Mammary epithelial cell (primary cell): ENCODE measurements at regions of chr4 and their contacts with region 1.

Region 1: DNA sequence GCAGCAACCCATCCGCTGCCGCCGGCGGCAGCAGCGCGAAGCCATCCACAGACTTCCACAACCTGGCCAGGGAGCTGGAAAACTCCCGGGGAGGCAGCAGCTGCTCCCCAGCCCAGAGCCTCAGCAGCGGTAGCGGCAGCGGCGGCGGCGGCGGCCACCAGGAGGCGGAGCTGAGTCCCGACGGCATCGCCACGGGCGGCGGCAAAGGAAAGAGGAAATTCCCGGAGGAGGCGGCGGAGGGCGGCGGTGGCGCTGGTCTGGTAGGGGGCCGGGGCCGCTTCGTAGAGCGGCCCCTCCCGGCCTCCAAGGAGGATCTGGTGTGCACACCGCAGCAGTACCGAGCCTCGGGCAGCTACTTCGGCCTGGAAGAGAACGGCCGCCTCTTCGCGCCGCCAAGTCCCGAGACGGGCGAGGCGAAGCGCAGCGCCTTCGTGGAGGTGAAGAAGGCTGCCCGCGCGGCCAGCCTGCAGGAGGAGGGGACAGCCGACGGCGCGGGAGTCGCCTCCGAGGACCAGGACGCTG is 4.9 kb downstream of the PRDM8 start:
- DNase-seq: peak; percentile 68
- H3K4me3 ChIP-seq: peak overlapping the region; percentile 52 to 69 (median 59)
- H3K27ac ChIP-seq: peak overlapping the region; percentile 36
- H3K4me1 ChIP-seq: peaks cover 30% of the 10 kb centered on the region
- H3K27me3 ChIP-seq: no peaks in the 10 kb centered on the region
- CTCF ChIP-seq: peak; percentile 42 to 72

Region 2: GRCh38 chr4:79917246-79917645 is 285.0 kb before region 1 on chr4:
- CTCF ChIA-PET with region 1: no interaction called
- dilution Hi-C with region 1: no loop called
- in situ Hi-C with region 1: loop called (anchors 25 kb)
- intact Hi-C with region 1: no loop called
- DNase-seq: peak; percentile 32
- H3K4me3 ChIP-seq: no peak overlapping the region
- H3K27ac ChIP-seq: no peak overlapping the region
- H3K4me1 ChIP-seq: peaks cover 7% of the 10 kb centered on the region
- H3K27me3 ChIP-seq: no peaks in the 10 kb centered on the region
- CTCF ChIP-seq: peak; percentile 57 to 86

Region 3: GRCh38 chr4:80079255-80079923 is 122.9 kb before region 1 on chr4:
- CTCF ChIA-PET with region 1: interaction called, 37 read pairs
- dilution Hi-C with region 1: no loop called
- in situ Hi-C with region 1: no loop called
- intact Hi-C with region 1: loop called (anchors 5 kb)
- DNase-seq: no peak
- H3K4me3 ChIP-seq: no peak overlapping the region
- H3K27ac ChIP-seq: peak overlapping the region; percentile 1
- H3K4me1 ChIP-seq: peaks cover 48% of the 10 kb centered on the region
- H3K27me3 ChIP-seq: no peaks in the 10 kb centered on the region
- CTCF ChIP-seq: no peak

Region 4: DNA sequence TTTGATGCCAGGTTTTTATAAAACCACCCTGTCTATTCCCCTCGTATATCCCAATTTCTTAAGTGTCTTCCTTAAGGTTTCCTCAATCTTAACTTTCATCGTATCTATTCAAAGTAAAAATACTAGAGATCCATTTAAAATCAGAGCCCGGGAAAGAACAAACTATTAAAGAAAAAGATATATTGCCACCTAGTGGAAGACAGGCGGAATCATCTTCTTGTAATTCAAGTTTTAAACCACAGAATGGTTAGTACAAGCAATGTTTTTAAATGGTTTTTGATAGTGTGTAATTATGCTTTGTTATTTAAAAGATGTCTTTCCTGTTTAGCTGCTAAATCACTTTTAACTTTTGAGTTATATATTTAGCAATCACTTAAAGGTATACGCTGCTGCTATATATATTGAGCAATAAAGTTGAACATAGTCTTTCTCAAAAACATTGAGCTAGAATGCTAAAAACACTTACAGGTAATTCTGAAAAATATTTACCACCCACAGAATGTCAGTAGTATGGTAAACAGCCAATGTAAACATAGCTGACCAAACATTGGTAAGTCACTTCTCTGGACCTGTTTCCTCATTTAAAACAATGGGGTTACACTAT is 13.3 kb after region 1 on chr4:
- CTCF ChIA-PET with region 1: no interaction called
- dilution Hi-C with region 1: no loop called
- in situ Hi-C with region 1: no loop called
- intact Hi-C with region 1: loop called (anchors 1 kb)
- DNase-seq: no peak
- H3K4me3 ChIP-seq: no peak overlapping the region
- H3K27ac ChIP-seq: no peak overlapping the region
- H3K4me1 ChIP-seq: peaks cover 16% of the 10 kb centered on the region
- H3K27me3 ChIP-seq: no peaks in the 10 kb centered on the region
- CTCF ChIP-seq: peak; percentile 60 to 61

Region 5: GRCh38 chr4:80422727-80423404 is 220.6 kb after region 1 on chr4:
- CTCF ChIA-PET with region 1: no interaction called
- dilution Hi-C with region 1: no loop called
- in situ Hi-C with region 1: no loop called
- intact Hi-C with region 1: no loop called
- DNase-seq: no peak
- H3K4me3 ChIP-seq: no peak overlapping the region
- H3K27ac ChIP-seq: no peak overlapping the region
- H3K4me1 ChIP-seq: no peaks in the 10 kb centered on the region
- H3K27me3 ChIP-seq: no peaks in the 10 kb centered on the region
- CTCF ChIP-seq: no peak